H1 (cell line): ENCODE measurements at regions of chr6 and their contacts with region 1.

Region 1: DNA sequence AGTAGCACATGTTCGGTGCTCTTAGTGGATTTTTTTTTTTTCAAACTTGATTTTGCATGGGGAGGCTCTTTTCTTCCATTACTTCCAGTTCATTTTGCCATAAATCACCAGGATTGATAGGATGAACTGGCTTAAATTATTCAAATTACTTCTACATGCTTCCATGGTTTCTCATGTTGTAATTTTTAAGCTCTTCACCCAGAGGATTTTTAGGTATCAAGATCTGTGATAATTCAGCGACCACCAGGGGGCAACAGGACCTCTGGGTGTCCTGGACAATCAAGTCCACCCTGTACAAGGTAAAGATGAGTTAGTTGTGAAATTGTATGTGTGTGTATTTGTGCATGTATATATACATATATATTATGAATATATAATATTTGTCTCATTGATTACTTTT is 4.2 kb upstream of the EPHA7 start:
- DNase-seq: peak in 1 of 2 experiments; percentile 58
- H3K4me3 ChIP-seq: no peak overlapping the region
- H3K27ac ChIP-seq: no peak overlapping the region
- H3K4me1 ChIP-seq: no peaks in the 10 kb centered on the region
- H3K27me3 ChIP-seq: no peaks in the 10 kb centered on the region; a peak in 1 of 7 replicates
- CTCF ChIP-seq: peak; percentile 45 to 55 (median 49)
- EP300 ChIP-seq: no peak
- POLR2A ChIP-seq: no peak
- RAD21 ChIP-seq: peak; percentile 46 to 54

Region 2: GRCh38 chr6:92810913-92811312 is 612.6 kb before region 1 on chr6:
- CTCF ChIA-PET with region 1: interaction called, 12 read pairs
- POLR2A ChIA-PET with region 1: no interaction called
- DNase-seq: peak; percentile 19 to 64
- H3K4me3 ChIP-seq: no peak overlapping the region
- H3K27ac ChIP-seq: no peak overlapping the region
- H3K4me1 ChIP-seq: no peaks in the 10 kb centered on the region
- H3K27me3 ChIP-seq: no peaks in the 10 kb centered on the region
- CTCF ChIP-seq: peak; percentile 47 to 75 (median 59)
- EP300 ChIP-seq: no peak
- POLR2A ChIP-seq: no peak
- RAD21 ChIP-seq: peak; percentile 70 to 78

Region 3: DNA sequence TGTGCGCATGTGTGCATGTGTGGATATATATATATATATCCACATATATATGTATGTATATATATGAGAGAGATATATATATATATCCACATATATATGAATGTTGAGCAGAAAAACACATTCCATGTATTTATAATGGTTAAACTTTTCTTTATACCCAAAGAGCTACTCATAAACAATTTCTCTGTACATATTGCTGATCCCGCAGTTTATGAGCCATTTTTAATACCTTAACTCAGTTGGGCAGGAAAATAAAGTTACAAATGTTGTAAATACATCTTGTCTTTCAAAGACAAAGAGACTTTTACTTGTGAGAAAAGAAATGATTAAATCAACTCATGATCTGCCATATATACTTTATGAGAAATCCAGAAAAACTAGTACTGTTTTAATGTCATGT is 13.9 kb after region 1 on chr6:
- CTCF ChIA-PET with region 1: interaction called, 26 read pairs
- POLR2A ChIA-PET with region 1: no interaction called
- DNase-seq: no peak
- H3K4me3 ChIP-seq: no peak overlapping the region
- H3K27ac ChIP-seq: no peak overlapping the region
- H3K4me1 ChIP-seq: no peaks in the 10 kb centered on the region
- H3K27me3 ChIP-seq: no peaks in the 10 kb centered on the region
- CTCF ChIP-seq: no peak
- EP300 ChIP-seq: no peak
- POLR2A ChIP-seq: no peak
- RAD21 ChIP-seq: no peak

Region 4: GRCh38 chr6:93447874-93448273 is 24.3 kb after region 1 on chr6:
- CTCF ChIA-PET with region 1: interaction called, 22 read pairs
- POLR2A ChIA-PET with region 1: interaction called, 7 read pairs
- DNase-seq: no peak
- H3K4me3 ChIP-seq: no peak overlapping the region
- H3K27ac ChIP-seq: no peak overlapping the region
- H3K4me1 ChIP-seq: no peaks in the 10 kb centered on the region
- H3K27me3 ChIP-seq: no peaks in the 10 kb centered on the region
- CTCF ChIP-seq: peak in 2 of 3 experiments; percentile 19 to 52; a peak in 2 of 4 replicates
- EP300 ChIP-seq: no peak
- POLR2A ChIP-seq: no peak
- RAD21 ChIP-seq: peak; percentile 55 to 63

Region 5: DNA sequence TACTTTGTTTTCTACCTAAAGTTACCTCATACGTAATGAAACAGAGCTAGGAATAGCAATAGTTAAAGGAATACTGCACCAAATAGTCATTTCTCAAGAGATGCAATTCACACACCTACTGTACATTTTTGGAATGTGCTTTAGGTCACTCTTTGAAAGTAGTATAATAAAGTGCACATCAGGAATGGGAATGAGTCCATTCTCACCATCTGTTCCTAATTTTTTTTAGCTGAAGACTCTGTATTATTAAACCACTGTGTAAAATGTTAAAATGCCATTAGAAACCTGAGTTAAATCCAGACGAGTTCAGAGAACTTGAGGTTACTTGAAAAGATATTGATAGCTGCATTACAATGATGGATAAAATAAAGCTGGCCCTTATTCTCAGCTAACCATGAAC is 47.7 kb after region 1 on chr6:
- CTCF ChIA-PET with region 1: interaction called, 11 read pairs
- POLR2A ChIA-PET with region 1: no interaction called
- DNase-seq: no peak
- H3K4me3 ChIP-seq: no peak overlapping the region
- H3K27ac ChIP-seq: no peak overlapping the region
- H3K4me1 ChIP-seq: peaks cover 0 to 3% (median 0%) of the 10 kb centered on the region in 4 experiments; a peak in 1 of 7 replicates
- H3K27me3 ChIP-seq: peaks cover 0 to 2% (median 0%) of the 10 kb centered on the region in 4 experiments; a peak in 1 of 7 replicates
- CTCF ChIP-seq: no peak
- EP300 ChIP-seq: no peak
- POLR2A ChIP-seq: no peak
- RAD21 ChIP-seq: no peak